ENCODE measurements at regions of chr5 and their contacts with region 1.

Region 1: GRCh38 chr5:115309751-115310370 is 13.4 kb upstream of the CCDC112 start:
- DNase-seq: no peak
- H3K4me3 ChIP-seq: no peak overlapping the region
- H3K27ac ChIP-seq: no peak overlapping the region
- H3K4me1 ChIP-seq: no peaks in the 10 kb centered on the region
- H3K27me3 ChIP-seq: no peaks in the 10 kb centered on the region
- CTCF ChIP-seq: peak in 3 of 4 experiments; percentile 65 to 79 (median 79)
- POLR2A ChIP-seq: no peak

Region 2: DNA sequence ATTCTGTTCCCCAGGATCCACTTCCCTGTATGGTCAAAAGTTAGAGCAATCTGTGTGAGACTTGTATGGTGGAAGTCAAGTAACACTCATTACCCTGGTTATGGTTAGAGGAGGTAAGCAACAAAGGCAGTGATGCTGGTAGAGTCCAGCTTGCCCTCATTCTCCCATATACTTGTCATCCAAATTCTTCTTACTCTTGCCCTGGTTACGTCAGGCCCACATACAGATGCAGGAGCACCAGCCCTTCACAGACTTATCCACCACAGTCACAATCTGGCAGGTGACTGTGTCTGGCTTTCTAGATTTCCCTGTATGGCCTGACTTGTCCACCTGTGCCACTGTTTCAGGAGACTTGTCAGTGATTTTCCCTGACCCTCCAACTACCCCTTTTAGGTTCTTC is 82.6 kb before region 1 on chr5:
- intact Hi-C with region 1: no loop called
- DNase-seq: no peak
- H3K4me3 ChIP-seq: no peak overlapping the region
- H3K27ac ChIP-seq: no peak overlapping the region
- H3K4me1 ChIP-seq: no peaks in the 10 kb centered on the region
- H3K27me3 ChIP-seq: no peaks in the 10 kb centered on the region
- CTCF ChIP-seq: no peak
- POLR2A ChIP-seq: no peak

Region 3: DNA sequence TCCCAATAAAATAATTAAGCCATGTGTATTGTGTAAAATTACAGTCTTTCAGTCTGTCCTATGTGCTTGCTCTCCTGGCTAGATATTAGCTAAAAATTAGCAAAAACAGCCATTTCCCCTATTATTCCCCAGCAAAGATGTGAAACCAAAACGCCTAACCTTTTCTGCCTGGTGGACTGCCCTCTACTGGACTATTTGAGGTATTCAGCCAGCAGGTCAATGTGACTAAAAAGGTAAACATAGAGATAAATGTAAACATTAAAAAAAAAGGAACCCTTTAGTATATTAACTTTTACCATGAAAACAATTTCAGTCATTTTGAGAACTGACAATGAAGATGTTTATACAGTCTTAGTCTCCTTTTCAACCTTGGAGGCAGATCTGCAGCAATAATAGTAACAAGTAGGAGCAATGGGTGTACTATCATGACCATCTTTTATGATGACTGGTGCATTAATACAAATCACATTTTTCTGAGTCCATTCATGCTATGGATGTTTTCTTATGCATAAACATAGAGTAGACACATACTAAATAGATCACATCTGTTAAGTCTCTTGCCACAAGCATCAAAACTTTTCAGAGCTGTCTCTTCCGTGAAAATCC is 521.4 kb after region 1 on chr5:
- intact Hi-C with region 1: loop called (anchors 10 kb)
- DNase-seq: no peak
- H3K4me3 ChIP-seq: no peak overlapping the region
- H3K27ac ChIP-seq: no peak overlapping the region
- H3K4me1 ChIP-seq: no peaks in the 10 kb centered on the region
- H3K27me3 ChIP-seq: no peaks in the 10 kb centered on the region
- CTCF ChIP-seq: peak in 3 of 4 experiments; percentile 51 to 62 (median 57)
- POLR2A ChIP-seq: no peak

Measured in prostate gland (tissue), 2 donors.